ENCODE measurements at regions of chr4 and their contacts with region 1.

Region 1: DNA sequence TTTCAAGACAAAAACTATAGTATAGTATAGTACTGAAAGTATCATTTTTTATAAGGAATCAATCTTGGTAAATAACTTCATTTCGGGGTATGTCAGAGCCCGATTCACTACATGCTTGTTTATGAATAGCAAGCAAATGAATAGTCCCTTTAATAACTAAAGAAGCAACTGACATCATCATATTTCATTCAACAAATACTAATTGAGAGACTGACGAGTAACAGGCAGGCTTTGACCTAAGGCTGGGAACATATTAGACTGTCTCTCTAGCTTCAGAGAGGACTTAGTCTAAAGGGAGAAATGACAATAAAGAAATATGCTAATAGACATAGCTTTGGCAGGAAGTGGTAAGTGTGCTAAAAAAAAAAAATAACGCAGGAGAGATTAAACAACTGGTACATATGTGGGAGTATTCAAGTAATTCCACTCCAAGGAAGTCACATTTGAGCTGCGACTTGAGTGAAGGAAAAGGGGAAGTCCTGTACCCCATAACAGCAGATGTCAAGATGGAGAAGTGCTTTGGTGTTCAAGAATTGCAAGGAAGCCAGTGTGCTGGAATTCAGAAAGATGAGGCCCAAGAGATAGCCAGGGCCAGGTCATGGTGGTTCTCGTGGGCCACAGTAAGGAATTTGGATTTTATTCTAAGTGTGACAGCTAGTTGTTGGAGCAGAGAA is 284.9 kb downstream of the FBXO8 start:
- DNase-seq: no peak
- ATAC-seq: no peak
- H3K4me3 ChIP-seq: no peak overlapping the region
- H3K27ac ChIP-seq: no peak overlapping the region
- H3K4me1 ChIP-seq: no peaks in the 10 kb centered on the region
- H3K27me3 ChIP-seq: no peaks in the 10 kb centered on the region

Region 2: GRCh38 chr4:174111422-174111821 is 112.8 kb after region 1 on chr4:
- intact Hi-C with region 1: loop called in 1 of 4 experiments (anchors 5 kb)
- DNase-seq: no peak
- ATAC-seq: no peak
- H3K4me3 ChIP-seq: no peak overlapping the region
- H3K27ac ChIP-seq: no peak overlapping the region
- H3K4me1 ChIP-seq: peaks cover 2% of the 10 kb centered on the region
- H3K27me3 ChIP-seq: no peaks in the 10 kb centered on the region

Region 3: DNA sequence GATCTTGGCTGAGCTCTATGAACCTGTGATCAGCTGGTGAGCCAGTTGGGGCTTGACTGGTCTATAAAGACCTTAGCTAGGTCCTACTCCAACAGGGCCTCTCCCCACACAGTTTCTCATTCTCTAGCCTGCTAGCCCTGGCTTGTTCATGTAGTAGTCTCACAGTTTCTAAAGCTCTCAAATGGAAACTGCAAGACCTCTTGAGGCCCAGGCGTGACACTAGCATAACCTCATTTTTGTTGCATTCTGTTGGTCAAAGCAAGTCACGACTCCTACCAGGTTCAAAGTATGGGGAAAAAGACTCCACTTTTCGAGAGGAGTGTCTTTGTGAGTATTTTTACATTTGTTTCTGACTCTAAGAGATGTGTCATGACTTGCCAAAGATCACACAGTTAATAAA is 336.0 kb after region 1 on chr4:
- intact Hi-C with region 1: no loop called
- DNase-seq: no peak
- ATAC-seq: no peak
- H3K4me3 ChIP-seq: no peak overlapping the region
- H3K27ac ChIP-seq: no peak overlapping the region
- H3K4me1 ChIP-seq: no peaks in the 10 kb centered on the region
- H3K27me3 ChIP-seq: no peaks in the 10 kb centered on the region

Measured in right cardiac atrium (tissue), 5 donors.